ENCODE measurements at regions of chr7 and their contacts with region 1.

Region 1: GRCh38 chr7:108146070-108146837 is 16.1 kb upstream of the LAMB4 start:
- DNase-seq: peak; percentile 40 to 73 (median 48)
- H3K4me3 ChIP-seq: no peak overlapping the region
- H3K27ac ChIP-seq: no peak overlapping the region
- H3K4me1 ChIP-seq: no peaks in the 10 kb centered on the region
- H3K27me3 ChIP-seq: no peaks in the 10 kb centered on the region
- CTCF ChIP-seq: peak; percentile 60 to 84 (median 81)
- EP300 ChIP-seq: no peak
- POLR2A ChIP-seq: no peak

Region 2: DNA sequence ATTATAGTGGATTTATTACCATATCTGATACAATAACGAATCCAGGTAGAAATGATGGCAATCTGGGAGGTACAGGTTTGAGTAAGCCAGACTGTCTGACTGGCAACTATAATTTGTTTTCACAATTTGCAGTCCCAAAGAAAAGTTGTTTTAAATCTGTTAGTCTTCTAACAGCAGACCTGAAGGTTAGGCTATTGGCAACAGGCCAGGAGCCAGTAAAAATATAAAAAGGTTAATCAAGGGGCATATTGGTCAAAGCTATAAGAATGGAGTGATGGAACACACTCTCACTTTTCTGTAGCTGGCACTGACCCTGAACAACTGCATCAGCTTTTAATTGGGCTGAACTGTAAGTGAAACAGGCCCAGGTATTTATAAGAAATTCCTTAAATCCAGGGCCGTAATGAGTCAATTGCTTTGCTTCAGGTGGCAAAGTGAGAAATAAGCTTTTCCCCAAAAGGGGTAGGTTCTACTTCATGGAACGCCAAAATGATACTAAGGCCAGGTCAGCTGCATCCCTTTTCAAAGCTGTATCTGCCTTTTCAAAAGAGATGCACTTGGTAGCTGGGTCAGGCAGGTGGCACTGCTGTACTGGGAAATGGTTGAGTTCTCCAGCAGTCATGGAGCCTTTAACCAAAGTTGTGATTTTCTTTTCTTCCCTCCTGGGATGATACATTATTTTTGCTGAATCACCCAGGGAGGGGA is 683.4 kb before region 1 on chr7:
- intact Hi-C with region 1: loop called in 1 of 4 experiments (anchors 10 kb)
- DNase-seq: peak; percentile 50 to 75 (median 64)
- H3K4me3 ChIP-seq: no peak overlapping the region
- H3K27ac ChIP-seq: no peak overlapping the region
- H3K4me1 ChIP-seq: no peaks in the 10 kb centered on the region
- H3K27me3 ChIP-seq: no peaks in the 10 kb centered on the region
- CTCF ChIP-seq: peak; percentile 28 to 79 (median 70)
- EP300 ChIP-seq: no peak
- POLR2A ChIP-seq: no peak

Region 3: DNA sequence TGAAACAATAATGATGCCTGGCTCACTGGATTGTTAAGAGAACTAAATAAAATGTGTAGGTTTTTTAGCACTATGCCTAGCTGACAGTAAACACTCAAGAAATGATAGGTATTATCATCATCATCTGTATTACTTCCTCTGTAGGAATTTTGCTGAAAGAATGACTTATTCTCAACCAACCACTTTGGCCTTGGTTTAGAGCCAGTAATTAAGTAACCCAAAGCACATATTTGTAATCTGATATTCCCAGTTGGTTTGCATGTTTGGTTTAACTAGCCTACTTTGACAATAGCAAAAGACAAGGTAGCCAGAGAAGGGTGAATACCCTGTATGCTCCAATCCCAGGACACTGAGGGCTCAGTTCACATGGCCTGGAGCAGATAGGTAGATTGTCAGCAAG is 531.8 kb before region 1 on chr7:
- intact Hi-C with region 1: no loop called
- DNase-seq: no peak
- H3K4me3 ChIP-seq: no peak overlapping the region
- H3K27ac ChIP-seq: no peak overlapping the region
- H3K4me1 ChIP-seq: no peaks in the 10 kb centered on the region
- H3K27me3 ChIP-seq: no peaks in the 10 kb centered on the region
- CTCF ChIP-seq: no peak
- EP300 ChIP-seq: no peak
- POLR2A ChIP-seq: no peak

Region 4: DNA sequence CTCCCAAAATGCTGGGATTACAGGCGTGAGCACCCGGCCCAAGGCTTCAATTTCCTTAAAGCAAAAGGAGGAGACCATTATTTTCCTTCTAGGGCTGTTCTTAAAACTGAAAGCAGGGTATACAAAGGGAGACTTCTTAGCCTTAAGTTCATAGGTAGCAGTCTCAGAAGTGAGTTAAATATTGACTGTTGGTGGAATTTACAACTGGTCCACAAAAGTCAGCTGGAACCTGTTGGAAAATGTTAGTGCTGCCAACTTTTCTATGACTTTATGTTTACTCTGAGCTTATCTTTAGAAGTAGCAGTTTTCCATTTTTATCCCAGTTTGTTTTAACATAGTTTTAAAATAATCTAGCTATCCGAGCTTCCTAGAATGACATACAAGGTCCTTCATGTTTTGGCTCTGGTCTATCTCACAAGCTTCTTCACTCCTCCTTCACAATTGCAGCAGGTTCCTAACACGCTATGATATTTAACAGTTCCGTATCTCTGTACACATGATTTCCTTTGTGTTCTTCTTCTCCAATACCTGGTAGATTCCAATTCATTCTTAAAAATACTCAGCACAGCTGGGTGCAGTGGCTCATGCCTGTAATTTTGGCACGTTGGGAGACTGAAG is 346.5 kb before region 1 on chr7:
- intact Hi-C with region 1: no loop called
- DNase-seq: no peak
- H3K4me3 ChIP-seq: no peak overlapping the region
- H3K27ac ChIP-seq: peak overlapping the region in 1 of 2 donors; percentile 1
- H3K4me1 ChIP-seq: peaks cover 11% of the 10 kb centered on the region
- H3K27me3 ChIP-seq: no peaks in the 10 kb centered on the region
- CTCF ChIP-seq: no peak
- EP300 ChIP-seq: no peak
- POLR2A ChIP-seq: no peak

Region 5: GRCh38 chr7:107890962-107891635 is 255.2 kb before region 1 on chr7 and contains the start of gene DLD:
- intact Hi-C with region 1: loop called in 2 of 4 experiments (anchors 5 to 10 kb)
- DNase-seq: peak; percentile 91 to 96 (median 94)
- H3K4me3 ChIP-seq: peak within 1 kb of the TSS; percentile 80
- H3K27ac ChIP-seq: peak within 1 kb of the TSS; percentile 84 to 87
- H3K4me1 ChIP-seq: peaks cover 2% of the 10 kb centered on the region
- H3K27me3 ChIP-seq: no peaks in the 10 kb centered on the region
- CTCF ChIP-seq: peak in 2 of 3 donors; percentile 36 to 37
- EP300 ChIP-seq: no peak
- POLR2A ChIP-seq: peak; percentile 92
- total RNA-seq, gene DLD: 35.4 to 72.1 (median 49.7) TPM

Region 6: DNA sequence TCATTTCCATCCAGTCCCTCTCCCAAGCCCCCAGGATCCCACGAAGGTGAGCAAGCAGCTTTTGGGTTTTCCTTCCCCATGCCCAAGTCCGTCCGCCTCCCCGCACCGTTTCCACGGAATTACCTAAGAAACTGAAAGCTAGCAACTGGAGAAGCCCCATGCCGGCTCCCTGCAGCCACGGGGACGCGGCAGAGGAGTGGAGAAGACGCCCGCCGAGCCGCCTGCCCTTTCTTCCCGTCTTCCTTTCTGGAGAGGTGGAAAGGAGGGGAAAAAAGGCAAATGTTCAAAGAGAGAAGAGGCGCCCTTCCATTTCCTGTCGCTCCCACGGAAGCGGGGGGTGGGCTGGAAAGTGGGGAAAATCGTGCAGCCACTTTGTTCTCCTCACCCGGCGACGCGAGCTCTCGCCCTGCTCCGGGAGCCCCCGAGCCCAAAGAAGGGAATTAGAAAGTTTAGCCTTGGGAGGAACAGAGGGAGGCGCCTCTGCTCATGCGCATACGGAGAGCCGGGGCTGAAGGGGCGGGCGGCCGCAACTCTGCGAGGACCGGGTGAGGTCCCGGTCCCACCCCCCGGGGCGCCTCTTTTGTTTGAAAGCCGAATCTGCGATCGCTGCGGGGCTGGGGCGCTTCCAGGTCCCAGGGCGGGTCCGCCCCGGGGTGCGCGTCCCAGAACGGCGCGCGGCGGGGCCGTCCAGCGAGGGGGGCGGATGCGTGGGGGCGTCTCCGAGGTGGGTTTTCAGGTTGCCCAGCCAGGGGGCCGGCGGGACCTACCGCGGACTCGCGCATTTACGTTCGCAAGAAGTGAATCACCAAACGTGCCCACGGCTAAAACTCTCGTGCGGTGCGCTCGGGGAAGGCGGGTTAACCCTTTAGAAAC is 143.3 kb before region 1 on chr7 and contains the start of gene LAMB1:
- intact Hi-C with region 1: loop called in 1 of 4 experiments (anchors 10 kb)
- DNase-seq: peak; percentile 56 to 80 (median 77)
- H3K4me3 ChIP-seq: peak within 1 kb of the TSS; percentile 56
- H3K27ac ChIP-seq: peak within 1 kb of the TSS in 1 of 2 donors; percentile 57
- H3K4me1 ChIP-seq: peaks cover 2% of the 10 kb centered on the region
- H3K27me3 ChIP-seq: no peaks in the 10 kb centered on the region
- CTCF ChIP-seq: no peak
- EP300 ChIP-seq: no peak
- POLR2A ChIP-seq: peak; percentile 26
- total RNA-seq, gene LAMB1: 10.2 to 151 (median 65.0) TPM

Region 7: DNA sequence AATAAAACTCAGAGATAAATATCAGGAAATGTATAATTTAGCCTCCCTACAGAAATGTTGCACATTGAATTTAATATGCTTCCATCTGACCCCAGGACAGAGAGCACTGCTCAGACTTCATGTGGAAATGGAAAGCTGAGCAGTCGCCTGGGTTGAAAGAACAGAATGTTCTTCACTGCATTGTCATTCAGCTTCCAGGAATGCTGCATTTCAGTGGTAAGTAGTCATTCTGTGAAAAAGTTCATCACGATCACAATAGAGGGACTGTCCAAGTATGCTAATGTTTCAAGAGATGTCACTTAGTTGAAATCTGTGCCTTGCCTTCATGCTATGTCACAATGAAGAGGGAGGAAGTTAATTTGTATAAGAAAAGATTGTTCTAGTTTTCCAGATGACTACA is 162.6 kb after region 1 on chr7:
- intact Hi-C with region 1: no loop called
- DNase-seq: no peak
- H3K4me3 ChIP-seq: no peak overlapping the region
- H3K27ac ChIP-seq: no peak overlapping the region
- H3K4me1 ChIP-seq: no peaks in the 10 kb centered on the region
- H3K27me3 ChIP-seq: no peaks in the 10 kb centered on the region
- CTCF ChIP-seq: no peak
- EP300 ChIP-seq: no peak
- POLR2A ChIP-seq: no peak

Region 8: DNA sequence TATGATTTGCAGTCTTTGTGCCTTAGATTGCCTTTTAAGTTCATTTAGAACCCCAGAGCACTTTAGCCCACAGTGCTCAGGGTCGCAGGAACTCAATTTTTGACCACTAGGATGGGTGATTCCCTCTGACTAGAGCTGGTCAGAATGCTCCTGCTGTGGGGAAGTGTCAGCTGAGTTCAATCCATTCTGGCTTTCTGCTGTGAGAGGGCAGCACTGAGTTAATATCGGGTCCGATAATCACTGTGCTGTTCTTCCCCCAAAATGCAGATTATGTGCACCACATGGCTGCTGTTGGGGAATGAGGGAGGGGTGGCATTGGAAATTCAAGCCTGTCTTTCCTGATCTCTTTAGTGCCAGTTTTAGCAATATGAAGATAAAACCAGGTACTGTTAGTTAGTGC is 1309.9 kb after region 1 on chr7:
- intact Hi-C with region 1: no loop called
- DNase-seq: no peak
- H3K4me3 ChIP-seq: no peak overlapping the region
- H3K27ac ChIP-seq: no peak overlapping the region
- H3K4me1 ChIP-seq: no peaks in the 10 kb centered on the region
- H3K27me3 ChIP-seq: no peaks in the 10 kb centered on the region
- CTCF ChIP-seq: no peak
- EP300 ChIP-seq: no peak
- POLR2A ChIP-seq: no peak